IMR-90 (cell line): ENCODE measurements at regions of chr9 and their contacts with region 1.

Region 1: DNA sequence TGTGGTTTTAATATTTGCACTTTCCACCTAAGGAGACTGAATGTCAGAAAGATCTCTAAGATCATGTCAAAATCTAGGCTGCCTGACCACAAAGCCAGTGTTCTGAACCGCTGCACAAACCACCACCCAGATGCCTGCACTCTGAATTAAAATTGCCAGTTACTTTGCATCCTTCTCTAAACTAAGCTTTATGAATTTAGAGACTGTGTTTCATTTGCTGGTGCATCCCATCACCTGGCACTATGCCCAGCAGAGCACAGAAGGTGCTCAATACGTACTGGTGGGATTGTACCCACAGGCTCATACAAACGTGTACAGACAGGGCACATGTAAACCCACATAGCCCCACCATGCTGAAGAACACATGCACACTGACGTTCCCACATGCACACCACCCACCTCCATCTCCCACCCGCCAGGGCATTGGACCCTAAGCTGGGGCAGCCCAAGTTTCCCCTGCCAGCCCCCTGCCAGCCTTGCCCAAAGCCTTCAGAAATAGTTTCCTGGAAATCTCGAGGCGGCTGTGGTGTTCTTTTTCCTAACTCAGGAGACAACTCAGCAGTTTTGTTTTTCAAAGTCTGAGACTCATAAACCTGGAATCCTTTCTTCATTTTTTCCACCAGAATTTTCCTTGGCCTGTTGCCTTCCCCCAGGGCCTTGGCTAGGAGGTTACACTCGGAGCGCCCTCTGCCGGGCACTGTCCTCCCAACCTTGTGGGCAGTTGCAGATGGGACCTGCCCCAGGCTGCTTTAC is 9.6 kb upstream of the TRAF1 start:
- DNase-seq: peak; percentile 95
- ATAC-seq: peak; percentile 61
- H3K4me3 ChIP-seq: peak overlapping the region; percentile 20
- H3K27ac ChIP-seq: peak overlapping the region; percentile 99
- H3K4me1 ChIP-seq: peaks cover 39% of the 10 kb centered on the region
- H3K27me3 ChIP-seq: no peaks in the 10 kb centered on the region
- CTCF ChIP-seq: peak; percentile 94
- POLR2A ChIP-seq: 0 out of 2 replicates have a peak, but pooled peaks have one; percentile 29
- RAD21 ChIP-seq: peak; percentile 91

Region 2: GRCh38 chr9:120610975-120611689 is 325.1 kb before region 1 on chr9:
- CTCF ChIA-PET with region 1: interaction called, 11 read pairs
- POLR2A ChIA-PET with region 1: no interaction called
- dilution Hi-C with region 1: no loop called
- in situ Hi-C with region 1: no loop called
- intact Hi-C with region 1: loop called (anchors 5 kb)
- DNase-seq: no peak
- ATAC-seq: 0 out of 2 replicates have a peak, but pooled peaks have one; percentile 35
- H3K4me3 ChIP-seq: no peak overlapping the region
- H3K27ac ChIP-seq: no peak overlapping the region
- H3K4me1 ChIP-seq: no peaks in the 10 kb centered on the region; the same call in 1 of the 2 replicates
- H3K27me3 ChIP-seq: no peaks in the 10 kb centered on the region
- CTCF ChIP-seq: 0 out of 2 replicates have a peak, but pooled peaks have one; percentile 20
- POLR2A ChIP-seq: no peak
- RAD21 ChIP-seq: no peak

Region 3: DNA sequence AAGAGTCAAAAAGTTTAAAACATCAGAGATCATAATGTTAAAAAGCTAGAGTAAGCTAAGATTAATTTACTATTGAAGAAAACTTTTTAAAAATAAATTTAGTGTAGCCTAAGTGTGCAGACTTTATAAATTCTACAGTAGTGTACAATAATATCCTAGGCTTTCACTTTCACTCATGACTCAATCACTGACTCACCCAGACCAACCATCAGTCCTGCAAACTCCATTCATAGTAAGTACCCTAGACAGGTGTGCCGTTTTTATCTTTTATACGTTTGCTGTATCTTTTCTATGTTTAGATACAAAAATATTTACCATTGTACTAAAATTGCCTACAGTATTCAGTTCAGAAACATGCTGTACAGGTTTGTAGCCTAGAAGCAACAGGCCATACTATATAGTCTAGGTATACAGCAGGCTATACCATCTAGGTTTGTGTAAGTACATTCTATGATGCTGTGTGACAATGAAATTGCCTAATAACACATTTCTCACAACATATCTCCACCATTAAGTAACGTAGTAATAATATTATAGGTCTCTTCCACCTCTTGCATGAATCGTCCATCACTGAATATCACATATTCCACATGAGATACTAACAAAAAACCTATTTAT is 281.1 kb before region 1 on chr9:
- CTCF ChIA-PET with region 1: no interaction called
- POLR2A ChIA-PET with region 1: interaction called, 27 read pairs
- dilution Hi-C with region 1: no loop called
- in situ Hi-C with region 1: no loop called
- intact Hi-C with region 1: no loop called
- DNase-seq: peak; percentile 70
- ATAC-seq: peak; percentile 86
- H3K4me3 ChIP-seq: no peak overlapping the region
- H3K27ac ChIP-seq: no peak overlapping the region
- H3K4me1 ChIP-seq: peaks cover 2% of the 10 kb centered on the region; the same call in 1 of the 2 replicates
- H3K27me3 ChIP-seq: no peaks in the 10 kb centered on the region
- CTCF ChIP-seq: no peak
- POLR2A ChIP-seq: no peak
- RAD21 ChIP-seq: no peak

Region 4: GRCh38 chr9:120713257-120714087 is 222.7 kb before region 1 on chr9:
- CTCF ChIA-PET with region 1: no interaction called
- POLR2A ChIA-PET with region 1: no interaction called
- dilution Hi-C with region 1: no loop called
- in situ Hi-C with region 1: no loop called
- intact Hi-C with region 1: no loop called
- DNase-seq: no peak
- ATAC-seq: no peak
- H3K4me3 ChIP-seq: peak overlapping the region; percentile 75
- H3K27ac ChIP-seq: peak overlapping the region; percentile 34; the same call in 1 of the 2 replicates
- H3K4me1 ChIP-seq: peaks cover 13% of the 10 kb centered on the region
- H3K27me3 ChIP-seq: no peaks in the 10 kb centered on the region
- CTCF ChIP-seq: no peak
- POLR2A ChIP-seq: no peak
- RAD21 ChIP-seq: no peak

Region 5: DNA sequence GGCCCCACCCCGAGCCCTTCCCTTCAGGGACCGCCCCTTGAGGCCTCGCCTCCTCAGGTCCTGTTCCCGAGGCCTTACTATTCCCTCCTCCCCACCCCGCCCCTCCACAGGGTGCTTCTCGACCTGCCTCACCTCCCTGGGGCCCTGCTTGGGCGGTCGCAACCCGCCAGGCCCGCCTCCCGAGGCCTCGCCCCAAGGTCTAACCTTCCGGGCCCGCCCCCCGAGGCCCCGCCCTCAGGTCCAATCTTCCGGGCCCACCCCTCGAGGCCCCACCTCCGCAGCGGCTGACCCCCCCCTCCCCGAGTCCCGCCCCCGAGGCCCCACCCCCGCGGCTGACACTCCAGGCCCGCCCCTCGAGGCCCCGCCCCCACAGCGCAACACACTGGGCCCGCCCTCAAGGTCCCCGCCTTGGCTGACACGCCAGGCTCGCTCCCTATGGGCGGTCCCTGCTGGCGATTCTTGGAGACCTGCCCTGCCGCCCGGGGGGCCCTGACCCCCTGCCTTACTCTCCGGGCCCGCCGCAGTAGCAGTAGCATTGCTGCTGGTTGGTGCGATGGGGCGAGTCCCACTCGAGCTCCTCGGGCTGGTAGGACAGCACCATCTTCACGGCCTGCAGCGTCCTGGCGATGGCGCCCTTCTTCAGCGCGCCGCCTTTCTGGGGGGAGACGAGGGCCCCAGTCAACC is 67.4 kb before region 1 on chr9:
- CTCF ChIA-PET with region 1: no interaction called
- POLR2A ChIA-PET with region 1: no interaction called
- dilution Hi-C with region 1: no loop called
- in situ Hi-C with region 1: loop called (anchors 5 kb)
- intact Hi-C with region 1: loop called (anchors 2 kb)
- DNase-seq: peak; percentile 84
- ATAC-seq: peak; percentile 92
- H3K4me3 ChIP-seq: peak overlapping the region; percentile 53
- H3K27ac ChIP-seq: peak overlapping the region; percentile 85
- H3K4me1 ChIP-seq: peaks cover 10% of the 10 kb centered on the region
- H3K27me3 ChIP-seq: no peaks in the 10 kb centered on the region
- CTCF ChIP-seq: peak; percentile 45
- POLR2A ChIP-seq: peak; percentile 49; the same call in 1 of the 2 replicates
- RAD21 ChIP-seq: peak; percentile 50

Region 6: GRCh38 chr9:120875954-120876841 is 60.0 kb before region 1 on chr9:
- CTCF ChIA-PET with region 1: no interaction called
- POLR2A ChIA-PET with region 1: no interaction called
- dilution Hi-C with region 1: no loop called
- in situ Hi-C with region 1: loop called (anchors 5 kb)
- intact Hi-C with region 1: loop called (anchors 1 kb)
- DNase-seq: peak; percentile 85
- ATAC-seq: peak; percentile 72
- H3K4me3 ChIP-seq: peak overlapping the region; percentile 59
- H3K27ac ChIP-seq: peak overlapping the region; percentile 76
- H3K4me1 ChIP-seq: peaks cover 15% of the 10 kb centered on the region
- H3K27me3 ChIP-seq: no peaks in the 10 kb centered on the region
- CTCF ChIP-seq: no peak
- POLR2A ChIP-seq: no peak; the same call in 1 of the 2 replicates
- RAD21 ChIP-seq: no peak

Region 7: DNA sequence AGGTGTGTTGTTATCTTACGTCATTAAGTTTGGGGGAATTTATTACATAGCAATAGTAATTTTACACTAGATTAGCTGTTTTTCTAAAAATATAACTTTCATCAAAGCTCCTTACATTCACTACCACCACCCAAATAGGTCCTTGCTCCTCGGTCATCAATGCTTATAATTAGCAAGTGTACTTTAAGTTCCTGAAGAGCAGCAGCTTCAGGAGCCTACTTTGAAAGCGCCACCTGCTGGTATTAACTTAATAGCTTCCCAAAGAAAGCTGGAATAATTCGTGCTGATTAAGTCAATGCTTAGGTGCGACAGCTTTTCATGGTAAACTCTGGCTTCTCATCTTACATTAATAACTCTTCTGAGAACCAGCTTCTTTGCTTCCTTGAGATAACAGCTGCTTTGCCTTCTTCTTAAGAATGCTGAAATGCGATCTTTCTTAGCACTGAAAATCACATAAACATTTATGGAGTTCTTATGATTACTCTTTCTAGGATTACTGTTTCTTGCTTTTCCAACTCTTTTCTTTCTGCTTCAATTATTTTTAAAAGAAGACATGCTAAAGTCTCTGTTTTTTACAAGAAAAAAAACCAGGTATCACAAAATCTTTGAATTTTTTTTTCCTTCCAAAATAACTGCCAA is 123.9 kb after region 1 on chr9:
- CTCF ChIA-PET with region 1: no interaction called
- POLR2A ChIA-PET with region 1: no interaction called
- dilution Hi-C with region 1: no loop called
- in situ Hi-C with region 1: no loop called
- intact Hi-C with region 1: loop called (anchors 5 kb)
- DNase-seq: peak; percentile 84
- ATAC-seq: peak; percentile 80
- H3K4me3 ChIP-seq: no peak overlapping the region
- H3K27ac ChIP-seq: no peak overlapping the region
- H3K4me1 ChIP-seq: peaks cover 1% of the 10 kb centered on the region; the same call in 1 of the 2 replicates
- H3K27me3 ChIP-seq: no peaks in the 10 kb centered on the region
- CTCF ChIP-seq: peak; percentile 74
- POLR2A ChIP-seq: no peak
- RAD21 ChIP-seq: peak; percentile 65